ENCODE measurements at regions of chr14 and their contacts with region 1.

Region 1: GRCh38 chr14:64986578-64987571 is at the start of gene FNTB:
- DNase-seq: peak; percentile 98
- H3K4me3 ChIP-seq: peak within 1 kb of the TSS; percentile 40 to 76 (median 63)
- H3K27ac ChIP-seq: peak within 1 kb of the TSS; percentile 32
- H3K4me1 ChIP-seq: peaks cover 15% of the 10 kb centered on the region
- H3K27me3 ChIP-seq: peaks cover 6 to 20% of the 10 kb centered on the region in 2 experiments
- CTCF ChIP-seq: peak; percentile 69 to 85
- POLR2A ChIP-seq: peak; percentile 43
- total RNA-seq, gene FNTB: 21.0 and 24.5 TPM in 2 replicates

Region 2: DNA sequence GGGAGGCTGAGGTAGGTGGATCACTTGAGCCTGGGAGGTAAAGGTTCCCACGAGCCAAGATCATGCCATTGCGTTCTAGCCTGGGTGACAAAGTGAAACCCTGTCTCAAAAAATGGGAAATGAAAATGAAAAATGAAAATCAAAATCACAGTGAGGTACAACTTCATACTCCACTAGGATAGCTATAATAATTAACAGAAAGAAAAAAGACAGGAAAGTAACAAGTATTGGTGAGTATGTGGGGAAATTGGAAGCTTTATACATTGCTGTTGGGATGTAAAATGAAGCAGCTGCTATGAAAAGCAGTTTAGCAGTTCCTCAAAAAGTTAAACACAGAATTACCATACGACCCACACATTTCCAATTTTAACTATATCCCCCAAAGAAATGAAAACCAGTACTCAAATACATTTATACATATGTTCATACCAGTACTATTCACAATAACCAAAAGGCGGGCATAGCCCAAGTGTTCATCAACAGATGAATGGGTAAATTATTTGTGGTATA is 1281.3 kb before region 1 on chr14:
- CTCF ChIA-PET with region 1: no interaction called
- POLR2A ChIA-PET with region 1: no interaction called
- dilution Hi-C with region 1: no loop called
- intact Hi-C with region 1: no loop called
- DNase-seq: no peak
- H3K4me3 ChIP-seq: no peak overlapping the region
- H3K27ac ChIP-seq: no peak overlapping the region
- H3K4me1 ChIP-seq: peaks cover 4% of the 10 kb centered on the region
- H3K27me3 ChIP-seq: no peaks in the 10 kb centered on the region
- CTCF ChIP-seq: no peak
- POLR2A ChIP-seq: no peak

Region 3: DNA sequence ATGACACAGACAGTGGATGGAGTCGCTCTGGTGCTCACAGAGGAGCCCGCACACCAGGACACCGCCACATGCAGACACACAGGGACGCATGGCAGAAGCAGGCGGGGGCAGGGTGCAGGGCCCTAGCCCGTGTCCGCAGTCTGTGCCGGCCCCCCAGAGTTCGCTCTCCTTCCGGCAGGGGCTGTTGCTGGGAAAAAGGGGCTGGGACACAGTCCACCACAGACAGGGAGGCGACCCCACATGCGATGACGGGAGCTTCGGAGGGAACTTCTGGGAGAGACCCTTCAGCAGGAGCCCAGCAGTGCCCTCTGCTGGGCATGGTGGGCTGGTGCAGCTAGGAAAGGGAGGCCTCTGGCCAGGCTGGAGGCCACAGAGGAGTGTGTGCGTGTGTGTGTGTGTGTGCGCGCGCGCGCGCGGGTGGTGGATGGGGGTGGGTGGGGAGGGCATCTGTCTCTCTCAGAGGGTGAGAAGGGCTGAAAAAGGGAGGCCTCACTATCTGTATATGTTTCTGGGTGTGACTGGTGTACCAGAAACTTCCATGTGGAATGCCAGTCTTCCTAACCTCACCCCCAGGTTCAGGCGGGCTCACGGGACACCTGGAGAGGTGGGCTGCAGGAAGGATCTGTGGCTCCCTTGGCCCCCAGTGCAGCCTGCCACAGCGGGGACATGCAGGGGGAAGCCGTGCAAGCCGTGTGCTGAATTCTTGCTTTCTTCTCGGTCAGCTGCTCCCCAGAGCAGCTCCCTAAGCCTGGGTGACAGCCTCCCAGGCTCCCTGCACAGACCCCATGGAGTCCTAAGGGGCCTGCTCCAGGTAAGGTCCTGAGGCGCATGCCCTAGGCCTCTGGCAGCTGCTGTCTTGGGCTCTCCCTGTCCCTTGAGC is 222.0 kb before region 1 on chr14:
- CTCF ChIA-PET with region 1: no interaction called
- POLR2A ChIA-PET with region 1: no interaction called
- dilution Hi-C with region 1: no loop called
- intact Hi-C with region 1: loop called (anchors 5 kb)
- DNase-seq: peak; percentile 74
- H3K4me3 ChIP-seq: no peak overlapping the region
- H3K27ac ChIP-seq: peak overlapping the region; percentile 30
- H3K4me1 ChIP-seq: peaks cover 21% of the 10 kb centered on the region
- H3K27me3 ChIP-seq: no peaks in the 10 kb centered on the region
- CTCF ChIP-seq: peak; percentile 80 to 97
- POLR2A ChIP-seq: no peak

Region 4: GRCh38 chr14:64823305-64823861 is 163.5 kb before region 1 on chr14:
- CTCF ChIA-PET with region 1: interaction called, 14 read pairs
- POLR2A ChIA-PET with region 1: no interaction called
- dilution Hi-C with region 1: no loop called
- intact Hi-C with region 1: loop called (anchors 1 kb)
- DNase-seq: peak; percentile 36
- H3K4me3 ChIP-seq: no peak overlapping the region
- H3K27ac ChIP-seq: no peak overlapping the region
- H3K4me1 ChIP-seq: no peaks in the 10 kb centered on the region
- H3K27me3 ChIP-seq: peaks cover 8 to 19% of the 10 kb centered on the region in 2 experiments
- CTCF ChIP-seq: peak; percentile 70 to 83
- POLR2A ChIP-seq: no peak

Region 5: GRCh38 chr14:64971943-64972791 is 14.7 kb before region 1 on chr14 and contains the start of gene RAB15:
- CTCF ChIA-PET with region 1: interaction called, 17 read pairs
- POLR2A ChIA-PET with region 1: no interaction called
- dilution Hi-C with region 1: no loop called
- intact Hi-C with region 1: loop called (anchors 1 kb)
- DNase-seq: peak; percentile 33
- H3K4me3 ChIP-seq: peak within 1 kb of the TSS; percentile 61 to 88 (median 65)
- H3K27ac ChIP-seq: no peak within 1 kb of the TSS
- H3K4me1 ChIP-seq: peaks cover 6% of the 10 kb centered on the region
- H3K27me3 ChIP-seq: no peaks in the 10 kb centered on the region
- CTCF ChIP-seq: no peak
- POLR2A ChIP-seq: no peak
- total RNA-seq, gene RAB15: 24.9 and 26.7 TPM in 2 replicates

Region 6: GRCh38 chr14:65019944-65020566 is 33.2 kb after region 1 on chr14:
- CTCF ChIA-PET with region 1: interaction called, 109 read pairs
- POLR2A ChIA-PET with region 1: interaction called, 5 read pairs
- dilution Hi-C with region 1: no loop called
- intact Hi-C with region 1: loop called (anchors 1 kb)
- DNase-seq: peak; percentile 82
- H3K4me3 ChIP-seq: no peak overlapping the region
- H3K27ac ChIP-seq: no peak overlapping the region
- H3K4me1 ChIP-seq: no peaks in the 10 kb centered on the region
- H3K27me3 ChIP-seq: no peaks in the 10 kb centered on the region
- CTCF ChIP-seq: peak; percentile 63
- POLR2A ChIP-seq: no peak

Region 7: GRCh38 chr14:65042731-65043372 is 56.0 kb after region 1 on chr14:
- CTCF ChIA-PET with region 1: no interaction called
- POLR2A ChIA-PET with region 1: no interaction called
- dilution Hi-C with region 1: no loop called
- intact Hi-C with region 1: no loop called
- DNase-seq: no peak
- H3K4me3 ChIP-seq: no peak overlapping the region
- H3K27ac ChIP-seq: no peak overlapping the region
- H3K4me1 ChIP-seq: no peaks in the 10 kb centered on the region
- H3K27me3 ChIP-seq: no peaks in the 10 kb centered on the region
- CTCF ChIP-seq: no peak
- POLR2A ChIP-seq: no peak

Measured in endothelial cell of umbilical vein (primary cell).